Natural killer cell (primary cell): ENCODE measurements at regions of chr15 and their contacts with region 1.

Region 1: GRCh38 chr15:63212050-63213004 is 22.9 kb downstream of the RAB8B start:
- DNase-seq: peak in 1 of 2 donors; percentile 41
- ATAC-seq: peak; percentile 17 to 66 (median 41)
- H3K4me3 ChIP-seq: no peak overlapping the region
- H3K4me3 Mint-ChIP-seq: peak overlapping the region; percentile 64
- H3K27ac ChIP-seq: peak overlapping the region; percentile 65
- H3K27ac Mint-ChIP-seq: peak overlapping the region; percentile 86 to 93
- H3K4me1 ChIP-seq: peaks cover 39% of the 10 kb centered on the region
- H3K4me1 Mint-ChIP-seq: peaks cover 76 to 82% of the 10 kb centered on the region in 2 donors
- H3K27me3 ChIP-seq: no peaks in the 10 kb centered on the region
- H3K27me3 Mint-ChIP-seq: no peaks in the 10 kb centered on the region
- CTCF ChIP-seq: no peak

Region 2: GRCh38 chr15:63233667-63234423 is 21.5 kb after region 1 on chr15:
- intact Hi-C with region 1: loop called (anchors 2 kb)
- DNase-seq: no peak
- ATAC-seq: no peak
- H3K4me3 ChIP-seq: no peak overlapping the region
- H3K4me3 Mint-ChIP-seq: peak overlapping the region; percentile 68
- H3K27ac ChIP-seq: peak overlapping the region; percentile 39
- H3K27ac Mint-ChIP-seq: peak overlapping the region; percentile 90 to 94
- H3K4me1 ChIP-seq: peaks cover 26% of the 10 kb centered on the region
- H3K4me1 Mint-ChIP-seq: peaks cover 72 to 75% of the 10 kb centered on the region in 2 donors
- H3K27me3 ChIP-seq: no peaks in the 10 kb centered on the region
- H3K27me3 Mint-ChIP-seq: no peaks in the 10 kb centered on the region
- CTCF ChIP-seq: no peak

Region 3: GRCh38 chr15:63246691-63247464 is 34.6 kb after region 1 on chr15:
- intact Hi-C with region 1: loop called (anchors 5 kb)
- DNase-seq: peak in 1 of 2 donors; percentile 38
- ATAC-seq: peak; percentile 81 to 90 (median 82)
- H3K4me3 ChIP-seq: no peak overlapping the region
- H3K4me3 Mint-ChIP-seq: peak overlapping the region; percentile 52
- H3K27ac ChIP-seq: peak overlapping the region; percentile 14
- H3K27ac Mint-ChIP-seq: peak overlapping the region; percentile 87 to 92
- H3K4me1 ChIP-seq: peaks cover 19% of the 10 kb centered on the region
- H3K4me1 Mint-ChIP-seq: peaks cover 83% of the 10 kb centered on the region in 2 donors
- H3K27me3 ChIP-seq: no peaks in the 10 kb centered on the region
- H3K27me3 Mint-ChIP-seq: no peaks in the 10 kb centered on the region
- CTCF ChIP-seq: no peak